Common myeloid progenitor, CD34-positive (primary cell): ENCODE measurements at regions of chr2 and their contacts with region 1.

Region 1: GRCh38 chr2:29000481-29000880 is 19.4 kb downstream of the TOGARAM2 start:
- DNase-seq: peak; percentile 94 to 98 (median 96)
- H3K4me3 ChIP-seq: peak overlapping the region in 1 of 7 experiments; percentile 35
- H3K27ac ChIP-seq: no peak overlapping the region
- H3K4me1 ChIP-seq: peaks cover 3 to 22% (median 21%) of the 10 kb centered on the region in 4 experiments
- H3K27me3 ChIP-seq: no peaks in the 10 kb centered on the region

Region 2: GRCh38 chr2:29047083-29047845 is 46.8 kb after region 1 on chr2:
- CTCF ChIA-PET with region 1: no interaction called
- POLR2A ChIA-PET with region 1: interaction called, 11 read pairs
- DNase-seq: no peak
- H3K4me3 ChIP-seq: no peak overlapping the region
- H3K27ac ChIP-seq: no peak overlapping the region
- H3K4me1 ChIP-seq: peaks cover 0 to 4% (median under 1%) of the 10 kb centered on the region in 4 experiments
- H3K27me3 ChIP-seq: no peaks in the 10 kb centered on the region